Prostate gland (tissue), 2 donors: ENCODE measurements at regions of chrX and their contacts with region 1.

Region 1: DNA sequence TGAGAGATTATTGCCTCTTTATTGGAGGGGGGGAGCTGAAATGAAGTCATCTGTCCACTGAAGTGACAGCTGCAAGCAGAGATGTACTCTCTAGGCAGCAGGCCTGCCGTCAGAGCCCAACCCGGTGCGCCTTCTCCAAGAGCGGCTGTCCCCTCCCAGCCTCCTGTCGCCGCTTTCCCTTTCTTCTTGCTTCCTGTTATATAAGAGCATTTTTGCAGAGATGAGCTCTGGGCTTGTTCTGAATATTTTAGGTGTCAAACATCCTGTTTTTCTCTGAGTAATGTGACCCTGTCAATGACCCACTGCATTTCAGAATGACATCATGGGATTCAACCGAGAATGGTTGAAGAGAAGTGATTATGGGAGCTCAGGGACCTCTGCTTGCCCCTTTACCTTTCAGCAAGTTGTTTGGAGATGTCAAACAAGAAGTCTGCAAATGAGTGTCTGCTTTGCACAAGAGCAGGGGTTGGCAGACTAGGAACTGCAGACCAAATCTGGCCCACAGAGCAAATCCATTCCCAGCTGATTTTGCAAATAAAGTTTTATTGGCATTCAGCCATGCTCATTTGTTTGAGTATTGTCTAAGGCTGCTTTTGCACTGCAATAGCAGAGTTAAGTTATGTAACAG is 79.9 kb downstream of the SLC9A6 start:
- DNase-seq: no peak
- H3K4me3 ChIP-seq: no peak overlapping the region
- H3K27ac ChIP-seq: no peak overlapping the region
- H3K4me1 ChIP-seq: no peaks in the 10 kb centered on the region
- H3K27me3 ChIP-seq: no peaks in the 10 kb centered on the region
- CTCF ChIP-seq: no peak
- POLR2A ChIP-seq: no peak

Region 2: DNA sequence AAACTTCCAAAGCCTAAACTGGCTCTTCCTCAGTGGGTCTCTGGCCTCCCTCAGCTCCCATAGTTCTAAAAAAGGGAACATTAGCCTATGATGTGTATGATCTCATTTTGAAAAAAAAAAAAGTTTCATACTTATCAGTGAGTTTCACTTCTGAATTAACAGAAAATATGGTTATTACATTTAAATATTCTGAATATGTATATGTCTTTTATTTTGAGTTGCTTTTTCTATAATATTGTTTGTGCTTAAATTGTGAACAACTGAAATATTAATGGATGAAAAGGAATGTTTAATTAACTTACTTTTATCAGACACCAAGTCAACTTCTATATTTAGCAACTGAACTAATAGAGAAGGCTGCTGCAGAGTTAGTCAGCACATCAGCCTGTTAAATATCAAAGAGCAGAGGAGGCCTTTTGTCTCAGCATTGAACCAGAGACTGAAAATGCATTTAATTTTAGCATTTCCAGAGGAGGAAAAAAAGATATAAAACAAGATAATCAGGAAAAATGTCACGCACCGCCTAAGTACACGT is 61.8 kb after region 1 on chrX:
- intact Hi-C with region 1: loop called (anchors 10 kb)
- DNase-seq: no peak
- H3K4me3 ChIP-seq: no peak overlapping the region
- H3K27ac ChIP-seq: no peak overlapping the region
- H3K4me1 ChIP-seq: no peaks in the 10 kb centered on the region
- H3K27me3 ChIP-seq: no peaks in the 10 kb centered on the region
- CTCF ChIP-seq: no peak
- POLR2A ChIP-seq: no peak